Posterior vena cava (tissue), 2 donors: ENCODE measurements at regions of chr12 and their contacts with region 1.

Region 1: DNA sequence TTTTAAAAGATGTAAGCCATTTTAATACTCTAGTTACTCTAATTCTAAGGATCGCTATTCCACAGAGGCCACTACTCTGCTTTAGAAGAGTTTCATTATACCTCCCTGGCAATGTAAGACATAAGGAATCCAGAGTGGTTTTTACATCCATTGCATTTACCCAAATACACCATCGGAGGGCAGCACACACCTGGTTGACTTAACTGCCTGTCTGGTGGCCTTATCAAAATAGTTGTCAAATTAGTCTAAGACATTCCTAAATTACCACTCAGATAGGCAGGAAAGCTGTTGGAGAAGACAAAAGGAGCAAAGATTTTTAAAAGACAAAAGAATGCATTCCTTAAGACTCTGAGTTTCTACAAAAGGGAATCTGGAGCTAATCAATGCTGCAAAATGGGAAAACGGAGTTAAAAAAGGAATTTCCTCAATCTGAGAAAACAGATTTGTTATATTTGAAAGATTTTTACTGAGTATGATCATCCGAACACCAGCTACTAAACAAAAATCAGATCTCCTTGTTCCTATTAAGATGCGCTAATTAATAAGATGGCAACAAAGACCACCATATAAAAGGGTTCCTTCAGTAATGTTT is 33.8 kb upstream of the FGD4 start:
- DNase-seq: no peak

Region 2: DNA sequence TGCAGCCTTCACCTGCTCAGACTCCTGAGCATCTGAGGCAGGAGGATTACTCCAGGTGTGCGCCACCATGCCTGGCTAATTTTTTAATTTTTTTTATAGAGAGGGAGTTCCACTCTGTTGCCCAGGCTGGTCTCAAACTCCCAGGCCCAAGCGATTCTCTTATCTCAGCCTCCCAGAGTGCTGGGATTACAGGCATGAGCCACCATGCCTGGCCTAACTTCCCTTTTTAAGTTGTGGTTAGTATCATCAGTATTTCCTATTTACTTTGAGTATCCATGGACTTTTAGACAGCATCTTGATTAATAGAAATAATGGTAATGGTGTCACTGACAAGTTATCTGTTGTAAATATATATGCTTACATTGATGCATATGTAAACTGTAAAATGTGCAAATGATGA is 150.7 kb after region 1 on chr12:
- intact Hi-C with region 1: no loop called
- DNase-seq: peak; percentile 50

Region 3: DNA sequence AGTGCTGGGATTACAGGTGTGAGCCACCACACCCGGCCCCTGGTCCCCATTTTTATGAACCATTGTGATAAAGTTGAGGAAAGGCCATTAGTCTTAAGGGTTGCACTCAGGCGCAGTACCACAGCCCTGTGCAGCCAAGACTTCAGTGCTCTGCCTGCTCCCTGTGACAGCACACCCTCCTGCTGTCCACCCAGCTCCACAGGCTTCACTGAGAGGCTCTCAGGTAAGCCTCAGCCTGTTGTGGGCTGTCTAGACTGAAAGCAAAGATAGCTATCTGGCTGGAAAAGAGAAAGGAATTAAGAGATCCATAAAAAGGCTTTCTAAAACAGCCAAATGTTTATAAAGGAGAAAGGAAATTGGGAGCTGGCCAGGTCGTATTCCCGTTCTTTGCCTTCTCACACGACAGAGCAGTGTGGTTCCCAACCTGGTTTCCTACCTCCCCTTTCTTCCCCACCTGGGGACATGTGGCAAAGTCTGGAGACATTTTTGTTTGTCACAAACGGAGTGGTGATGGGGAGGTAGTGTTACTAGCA is 294.4 kb after region 1 on chr12:
- intact Hi-C with region 1: loop called in 1 of 2 experiments (anchors 10 kb)
- DNase-seq: no peak

Region 4: DNA sequence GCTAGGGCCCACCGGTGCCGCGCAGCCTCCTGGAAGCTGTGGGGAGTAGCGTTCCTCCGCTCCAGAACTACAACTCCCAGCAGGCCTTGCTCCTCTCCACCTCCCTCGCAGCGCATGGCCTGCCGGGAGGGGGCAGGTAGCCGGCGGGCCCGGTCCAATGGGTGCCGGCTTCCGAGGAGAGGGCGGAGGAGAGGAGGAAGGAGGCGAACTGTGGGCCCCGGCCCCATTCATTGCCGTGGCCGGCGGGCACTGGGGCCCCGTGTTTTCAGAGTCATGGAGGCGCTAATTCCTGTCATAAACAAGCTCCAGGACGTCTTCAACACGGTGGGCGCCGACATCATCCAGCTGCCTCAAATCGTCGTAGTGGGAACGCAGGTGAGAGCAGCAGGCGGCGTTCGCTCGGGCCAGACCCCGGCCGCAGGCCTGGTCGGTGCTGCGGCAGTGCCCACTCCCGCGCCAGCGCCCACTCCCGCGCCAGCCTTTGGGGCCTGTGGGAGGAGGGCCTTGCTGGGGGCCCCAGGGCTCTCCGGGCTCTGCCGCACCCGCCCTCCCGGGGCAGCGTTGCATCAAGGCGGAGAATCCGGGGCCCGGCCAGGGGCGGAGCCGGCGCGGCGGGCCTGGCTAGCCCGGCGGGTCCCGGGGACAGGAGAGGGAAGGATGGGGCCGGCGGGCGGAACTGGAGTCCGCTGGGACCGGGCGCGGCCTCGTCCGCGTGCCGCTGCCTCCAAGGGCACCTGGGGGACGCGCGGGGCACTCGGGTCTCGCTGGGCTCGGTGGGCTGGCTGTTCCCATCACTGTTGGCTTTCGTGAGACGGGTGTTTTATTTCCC is 313.7 kb after region 1 on chr12 and contains the start of gene DNM1L:
- intact Hi-C with region 1: loop called in 1 of 2 experiments (anchors 10 kb)
- DNase-seq: peak; percentile 98
- total RNA-seq, gene DNM1L: 84.5 to 93.2 TPM